Heart right ventricle (tissue), 16 donors: ENCODE measurements at regions of chr20 and their contacts with region 1.

Region 1: DNA sequence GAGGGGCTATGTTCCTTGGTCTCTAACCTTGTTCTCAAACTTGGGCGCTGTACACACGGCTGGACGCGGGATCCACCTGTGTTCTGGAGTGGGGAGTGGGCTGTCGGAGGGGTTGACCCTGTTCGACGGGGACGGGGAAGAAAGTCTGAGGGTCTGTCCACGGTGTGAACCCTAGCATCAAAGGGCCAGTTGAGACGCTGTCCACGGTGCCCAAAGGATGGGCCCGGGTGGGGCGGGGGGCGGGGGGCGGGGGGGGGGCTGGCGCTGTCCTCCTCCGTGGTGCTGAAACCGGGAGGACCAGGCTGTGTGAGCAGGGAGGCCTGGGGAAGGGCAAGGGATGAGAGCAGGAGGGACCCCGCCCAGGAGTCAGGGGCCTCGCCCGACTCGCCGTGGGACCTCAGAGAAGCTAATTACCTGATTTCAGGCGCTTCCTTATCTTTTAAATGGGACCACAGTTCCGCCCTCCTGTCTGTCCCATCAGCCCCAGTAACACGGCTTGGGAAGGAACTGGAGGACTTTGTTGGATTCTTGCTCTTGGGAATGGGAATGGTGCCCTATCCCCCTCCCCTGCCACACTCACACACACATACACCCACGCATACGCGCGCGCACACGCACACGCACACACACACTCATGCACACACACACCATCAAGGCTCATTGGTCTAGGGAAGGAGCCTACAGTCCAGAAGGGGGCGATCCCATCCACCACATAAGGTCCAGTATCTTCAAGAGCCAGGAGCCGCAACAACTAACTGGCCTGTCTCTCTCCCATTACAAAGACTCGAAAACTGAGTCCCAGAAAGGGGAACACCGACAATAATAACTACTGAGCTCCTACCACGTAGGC is 1.0 kb upstream of the VSTM2L start:
- DNase-seq: no peak
- ATAC-seq: peak; percentile 47 to 84 (median 71)
- H3K4me3 ChIP-seq: peak overlapping the region in 7 of 10 donors; percentile 36 to 47 (median 41)
- H3K27ac ChIP-seq: no peak overlapping the region
- H3K4me1 ChIP-seq: peaks cover 1 to 24% (median 12%) of the 10 kb centered on the region in 9 donors
- H3K27me3 ChIP-seq: peaks cover 9 to 71% (median 64%) of the 10 kb centered on the region in 7 donors
- CTCF ChIP-seq: peak in 7 of 9 donors; percentile 21 to 52 (median 35)

Region 2: GRCh38 chr20:37564388-37565133 is 337.3 kb before region 1 on chr20:
- intact Hi-C with region 1: loop called in 1 of 10 experiments (anchors 10 kb)
- DNase-seq: peak; percentile 16 to 49
- ATAC-seq: peak in 7 of 8 donors; percentile 50 to 81 (median 72)
- H3K4me3 ChIP-seq: no peak overlapping the region
- H3K27ac ChIP-seq: no peak overlapping the region
- H3K4me1 ChIP-seq: peaks cover 0 to 7% (median 5%) of the 10 kb centered on the region in 9 donors
- H3K27me3 ChIP-seq: peaks cover 0 to 83% (median 61%) of the 10 kb centered on the region in 7 donors
- CTCF ChIP-seq: peak; percentile 83 to 95 (median 91)

Region 3: GRCh38 chr20:37651932-37652331 is 249.9 kb before region 1 on chr20:
- intact Hi-C with region 1: loop called in 1 of 10 experiments (anchors 5 kb)
- DNase-seq: peak; percentile 26 to 35
- ATAC-seq: peak; percentile 44 to 91 (median 82)
- H3K4me3 ChIP-seq: no peak overlapping the region
- H3K27ac ChIP-seq: no peak overlapping the region
- H3K4me1 ChIP-seq: peaks cover 0 to 17% (median 7%) of the 10 kb centered on the region in 9 donors
- H3K27me3 ChIP-seq: no peaks in the 10 kb centered on the region
- CTCF ChIP-seq: peak; percentile 7 to 59 (median 42)

Region 4: DNA sequence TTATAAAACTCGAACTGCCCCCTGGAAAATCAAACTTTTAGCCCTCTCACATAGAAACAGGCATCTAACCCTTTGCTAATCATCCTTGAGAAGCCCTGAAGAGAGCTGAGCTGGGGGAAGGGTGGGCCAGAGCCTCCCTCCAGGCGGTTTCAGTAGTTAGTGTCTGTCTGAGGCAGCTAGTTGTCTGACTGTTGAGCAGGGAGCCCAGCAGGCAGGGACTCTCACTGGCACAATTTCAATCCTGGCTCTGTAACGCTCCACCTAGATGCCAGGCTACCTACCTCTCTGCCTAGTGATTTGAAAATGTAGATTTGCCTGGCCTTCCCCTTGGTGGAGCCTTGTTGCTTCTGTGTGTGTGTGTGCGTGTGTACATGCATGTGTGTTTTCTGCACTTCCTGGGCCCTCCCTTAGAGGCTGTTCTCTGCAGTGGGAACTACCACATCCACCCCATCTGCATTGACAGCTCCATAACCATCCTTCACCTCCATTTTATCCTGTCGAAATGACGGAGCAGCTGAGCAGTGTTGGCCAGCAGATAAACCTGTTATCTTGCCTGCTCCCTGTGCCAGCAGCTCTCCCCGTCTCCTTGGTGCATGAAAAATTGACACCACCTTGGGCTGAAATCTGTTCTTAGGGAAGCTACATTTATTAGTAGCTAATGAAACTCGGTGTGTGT is 68.5 kb before region 1 on chr20:
- intact Hi-C with region 1: loop called in 1 of 10 experiments (anchors 10 kb)
- DNase-seq: no peak
- ATAC-seq: peak in 1 of 8 donors; percentile 69
- H3K4me3 ChIP-seq: no peak overlapping the region
- H3K27ac ChIP-seq: no peak overlapping the region
- H3K4me1 ChIP-seq: peaks cover 0 to 14% (median 0%) of the 10 kb centered on the region in 9 donors
- H3K27me3 ChIP-seq: no peaks in the 10 kb centered on the region
- CTCF ChIP-seq: no peak